T-cell (primary cell): ENCODE measurements at regions of chr9 and their contacts with region 1.

Region 1: DNA sequence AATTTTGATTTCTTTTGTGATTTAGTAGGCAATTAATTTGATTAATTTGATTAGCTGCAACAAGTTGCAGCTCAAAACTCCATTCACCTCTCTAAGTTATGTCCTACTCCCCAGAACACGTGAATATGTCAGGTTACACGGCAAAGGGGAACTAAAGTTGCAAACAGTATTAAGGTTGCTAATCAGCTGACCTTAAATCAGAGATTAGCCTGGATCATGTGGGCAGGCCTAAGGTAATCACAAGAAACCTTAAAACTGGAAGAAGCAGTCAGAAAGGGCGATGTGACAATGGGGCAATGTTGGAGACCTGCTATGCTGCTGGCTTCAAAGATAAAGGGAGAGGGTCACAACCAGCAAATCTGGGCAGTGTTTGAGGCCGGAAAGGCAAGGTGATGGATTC is 47.3 kb upstream of the ANXA1 start:
- DNase-seq: no peak
- ATAC-seq: no peak
- H3K4me3 ChIP-seq: no peak overlapping the region
- H3K4me3 Mint-ChIP-seq: no peak overlapping the region
- H3K27ac ChIP-seq: no peak overlapping the region
- H3K27ac Mint-ChIP-seq: no peak overlapping the region
- H3K4me1 ChIP-seq: no peaks in the 10 kb centered on the region
- H3K4me1 Mint-ChIP-seq: peaks cover 0 to 3% (median 0%) of the 10 kb centered on the region in 3 donors
- H3K27me3 ChIP-seq: no peaks in the 10 kb centered on the region
- H3K27me3 Mint-ChIP-seq: peaks cover 0 to 2% of the 10 kb centered on the region in 2 donors

Region 2: DNA sequence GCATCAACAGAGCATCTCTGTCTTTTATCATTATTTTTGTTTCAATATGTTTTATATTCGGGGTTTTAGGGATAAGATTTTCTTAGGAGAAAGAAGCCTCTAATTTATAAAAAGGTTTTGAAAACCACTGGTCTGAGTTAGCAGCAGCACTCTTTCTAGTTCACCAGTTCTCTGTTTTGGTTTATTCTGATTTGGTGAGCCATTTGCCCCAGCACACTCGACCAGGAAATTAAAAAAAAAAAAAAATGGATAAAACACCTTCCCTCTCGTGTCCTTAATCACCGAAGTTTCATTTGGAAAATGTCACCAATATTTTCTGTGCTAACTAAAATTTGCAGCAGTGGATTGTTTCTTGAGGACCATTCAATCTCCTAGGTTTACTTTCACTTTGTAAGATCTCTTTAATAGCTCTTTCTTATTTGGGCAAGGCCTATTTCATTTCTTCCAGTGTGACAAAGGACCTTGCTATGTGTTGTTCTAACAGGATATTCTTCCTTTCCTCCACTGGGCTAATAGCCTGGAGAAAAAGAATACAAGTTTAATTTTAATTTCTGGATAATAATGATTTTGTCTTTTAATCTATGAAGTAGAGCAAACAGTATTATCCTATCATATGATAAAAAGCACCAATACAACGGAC is 10.5 kb before region 1 on chr9:
- CTCF ChIA-PET with region 1: interaction called, 4 to 10 read pairs
- POLR2A ChIA-PET with region 1: no interaction called
- DNase-seq: no peak
- ATAC-seq: no peak
- H3K4me3 ChIP-seq: no peak overlapping the region
- H3K4me3 Mint-ChIP-seq: peak overlapping the region in 2 of 3 donors; percentile 24 to 71
- H3K27ac ChIP-seq: no peak overlapping the region
- H3K27ac Mint-ChIP-seq: no peak overlapping the region
- H3K4me1 ChIP-seq: no peaks in the 10 kb centered on the region
- H3K4me1 Mint-ChIP-seq: peaks cover 4 to 7% (median 5%) of the 10 kb centered on the region in 3 donors
- H3K27me3 ChIP-seq: no peaks in the 10 kb centered on the region
- H3K27me3 Mint-ChIP-seq: peaks cover 0 to 3% of the 10 kb centered on the region in 2 donors

Region 3: DNA sequence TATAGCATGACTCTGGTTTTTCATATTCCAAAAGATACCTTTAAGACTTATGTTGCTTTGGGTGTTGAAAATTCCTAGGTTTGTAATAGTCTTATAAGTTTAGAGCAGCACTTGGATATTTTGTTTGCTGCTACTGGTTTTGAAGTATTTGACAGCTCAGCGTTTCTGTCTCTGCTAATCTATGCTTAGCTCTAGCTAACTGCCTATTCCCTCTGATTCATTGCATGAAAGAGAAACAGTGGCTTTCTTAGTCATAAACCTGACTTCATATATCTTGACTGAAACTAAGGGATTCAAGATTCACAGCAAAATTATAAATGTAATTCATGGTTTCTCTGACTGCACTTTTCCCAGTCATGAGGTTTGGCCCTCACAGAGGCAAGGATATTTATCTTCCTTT is 11.7 kb after region 1 on chr9:
- CTCF ChIA-PET with region 1: interaction called, 5 to 11 read pairs
- POLR2A ChIA-PET with region 1: interaction called, 3 read pairs
- DNase-seq: no peak
- ATAC-seq: peak in 3 of 4 experiments; percentile 27 to 62 (median 47)
- H3K4me3 ChIP-seq: no peak overlapping the region
- H3K4me3 Mint-ChIP-seq: no peak overlapping the region
- H3K27ac ChIP-seq: no peak overlapping the region
- H3K27ac Mint-ChIP-seq: no peak overlapping the region
- H3K4me1 ChIP-seq: peaks cover 7 to 19% of the 10 kb centered on the region in 2 experiments
- H3K4me1 Mint-ChIP-seq: peaks cover 36 to 44% (median 41%) of the 10 kb centered on the region in 3 donors
- H3K27me3 ChIP-seq: no peaks in the 10 kb centered on the region
- H3K27me3 Mint-ChIP-seq: no peaks in the 10 kb centered on the region

Region 4: DNA sequence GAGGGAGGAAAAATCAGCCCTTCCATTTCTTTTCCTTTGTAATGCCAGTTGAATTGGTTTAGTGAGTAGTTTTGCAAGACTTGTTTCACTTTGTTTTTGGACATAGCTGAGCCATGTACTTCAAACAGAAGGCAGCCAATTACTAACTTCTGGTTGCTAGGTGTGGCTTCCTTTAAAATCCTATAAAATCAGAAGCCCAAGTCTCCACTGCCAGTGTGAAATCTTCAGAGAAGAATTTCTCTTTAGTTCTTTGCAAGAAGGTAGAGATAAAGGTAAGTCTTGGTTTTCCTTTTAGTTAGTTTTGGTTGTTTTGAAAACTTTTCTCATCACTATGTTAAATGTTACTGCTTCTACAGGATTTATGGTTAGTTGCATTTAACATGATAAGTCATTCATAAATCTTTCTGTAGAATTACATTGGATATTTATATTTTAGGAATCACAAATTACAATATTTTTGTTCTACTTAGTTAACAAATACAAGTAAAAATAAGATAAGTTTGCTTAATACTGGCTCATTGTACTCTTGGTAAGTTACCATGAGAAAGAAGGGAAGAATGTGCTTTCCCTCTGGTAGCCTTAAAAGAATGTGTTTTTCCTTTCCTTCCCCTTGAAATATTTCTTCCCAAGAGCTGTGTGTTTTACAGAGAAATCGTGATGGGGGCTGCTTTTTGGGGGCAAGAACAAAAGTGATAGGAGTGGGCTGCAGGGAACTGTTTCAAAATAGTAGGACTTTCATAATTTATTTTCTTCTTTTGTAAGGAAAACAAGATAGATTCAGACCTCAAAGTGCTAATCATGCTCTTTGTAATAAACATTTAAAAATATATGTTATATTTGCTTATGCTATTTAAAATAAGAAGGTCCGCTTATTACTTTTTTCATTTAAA is 47.6 kb after region 1 on chr9 and contains the start of gene ANXA1:
- CTCF ChIA-PET with region 1: interaction called, 7 to 12 read pairs
- POLR2A ChIA-PET with region 1: interaction called in 1 of 2 experiments, 15 read pairs
- DNase-seq: peak in 4 of 35 experiments; percentile 14 to 74 (median 30)
- ATAC-seq: peak; percentile 33 to 77 (median 54)
- H3K4me3 ChIP-seq: peak within 1 kb of the TSS; percentile 63 to 64
- H3K4me3 Mint-ChIP-seq: peak within 1 kb of the TSS; percentile 87 to 98 (median 91)
- H3K27ac ChIP-seq: peak within 1 kb of the TSS; percentile 90
- H3K27ac Mint-ChIP-seq: peak within 1 kb of the TSS; percentile 91 to 94
- H3K4me1 ChIP-seq: peaks cover 17 to 62% of the 10 kb centered on the region in 2 experiments
- H3K4me1 Mint-ChIP-seq: peaks cover 69 to 85% (median 74%) of the 10 kb centered on the region in 3 donors
- H3K27me3 ChIP-seq: no peaks in the 10 kb centered on the region
- H3K27me3 Mint-ChIP-seq: peaks cover 0 to 1% of the 10 kb centered on the region in 2 donors
- total RNA-seq, gene ANXA1: 173 to 570 (median 200) TPM

Region 5: GRCh38 chr9:73157811-73158210 is 53.5 kb after region 1 on chr9:
- CTCF ChIA-PET with region 1: interaction called, 11 to 12 read pairs
- POLR2A ChIA-PET with region 1: interaction called in 1 of 2 experiments, 15 read pairs
- DNase-seq: no peak
- ATAC-seq: no peak
- H3K4me3 ChIP-seq: no peak overlapping the region
- H3K4me3 Mint-ChIP-seq: peak overlapping the region; percentile 38 to 49 (median 39)
- H3K27ac ChIP-seq: peak overlapping the region; percentile 28
- H3K27ac Mint-ChIP-seq: peak overlapping the region; percentile 61 to 71
- H3K4me1 ChIP-seq: peaks cover 22 to 41% of the 10 kb centered on the region in 2 experiments
- H3K4me1 Mint-ChIP-seq: peaks cover 59 to 73% (median 70%) of the 10 kb centered on the region in 3 donors
- H3K27me3 ChIP-seq: no peaks in the 10 kb centered on the region
- H3K27me3 Mint-ChIP-seq: no peaks in the 10 kb centered on the region

Region 6: DNA sequence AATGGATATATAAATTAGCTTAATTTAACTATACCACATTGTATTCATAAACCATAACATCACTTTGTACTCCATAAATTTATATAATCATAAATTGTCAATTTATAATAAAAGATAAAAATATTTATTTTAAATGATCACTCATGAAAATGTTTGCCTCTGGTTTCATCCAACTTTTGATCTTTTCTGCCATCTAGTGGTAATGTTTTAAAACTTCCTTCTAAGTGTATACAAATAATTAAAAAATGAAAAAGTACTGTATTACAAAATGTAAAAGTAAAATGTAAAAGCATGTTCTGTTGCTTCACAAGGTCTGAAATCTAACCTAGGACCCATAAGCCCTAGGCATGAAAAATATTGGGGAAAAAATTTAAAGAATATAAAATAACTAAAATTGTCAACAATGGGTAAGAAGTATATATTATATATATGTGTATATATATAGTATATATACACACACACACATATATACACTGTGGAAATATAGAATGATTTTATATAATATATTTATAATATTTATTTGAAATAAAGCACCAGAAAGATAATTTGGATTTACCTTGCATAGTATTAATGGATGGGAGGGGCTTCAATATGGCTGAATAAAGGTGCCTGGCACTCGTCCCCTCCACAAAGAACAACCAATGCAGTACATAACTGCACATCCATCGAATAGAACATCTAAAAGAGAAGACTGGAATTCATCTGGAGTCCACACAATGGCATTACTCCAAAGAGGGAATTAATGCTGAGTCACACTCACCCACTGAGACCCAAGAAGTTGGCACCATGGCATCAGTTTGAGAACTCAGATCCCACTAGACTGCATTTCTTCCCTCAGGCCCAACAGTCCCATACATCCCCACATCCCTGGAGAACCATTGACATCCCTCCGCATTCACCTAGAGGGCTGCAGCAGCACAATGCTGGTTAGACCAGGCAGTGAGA is 79.8 kb after region 1 on chr9:
- CTCF ChIA-PET with region 1: interaction called, 11 to 68 read pairs
- POLR2A ChIA-PET with region 1: interaction called in 1 of 2 experiments, 3 read pairs
- DNase-seq: peak in 1 of 35 experiments; percentile 77
- ATAC-seq: peak in 1 of 4 experiments; percentile 55
- H3K4me3 ChIP-seq: no peak overlapping the region
- H3K4me3 Mint-ChIP-seq: no peak overlapping the region
- H3K27ac ChIP-seq: no peak overlapping the region
- H3K27ac Mint-ChIP-seq: no peak overlapping the region
- H3K4me1 ChIP-seq: no peaks in the 10 kb centered on the region
- H3K4me1 Mint-ChIP-seq: peaks cover 0 to 2% (median 0%) of the 10 kb centered on the region in 3 donors
- H3K27me3 ChIP-seq: peaks cover 0 to 8% of the 10 kb centered on the region in 2 experiments
- H3K27me3 Mint-ChIP-seq: peaks cover 11 to 13% of the 10 kb centered on the region in 2 donors